GM18951 (cell line): ENCODE measurements at regions of chr13 and their contacts with region 1.

Region 1: DNA sequence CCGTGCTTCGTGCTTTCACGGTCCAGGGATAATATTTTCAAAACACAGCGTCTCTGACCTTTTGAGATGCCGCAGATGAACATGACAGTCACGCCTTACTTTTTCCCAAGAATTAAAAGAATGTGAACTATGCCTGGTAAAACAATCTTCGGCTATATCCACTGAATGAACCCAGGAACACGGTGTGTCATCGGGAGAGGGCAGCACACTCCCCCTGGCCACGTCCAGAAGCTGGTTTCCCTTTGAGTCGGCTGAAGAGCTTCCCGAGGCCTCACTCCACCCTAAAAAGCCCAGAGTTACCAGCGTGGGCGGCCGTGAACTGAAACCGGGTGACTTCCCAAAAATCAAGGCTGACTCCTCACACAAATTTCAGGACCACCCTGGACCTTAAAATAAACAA is 22.9 kb upstream of the SHISA2 start:
- POLR2A ChIP-seq: no peak

Region 2: GRCh38 chr13:25001476-25002206 is 1073.1 kb before region 1 on chr13:
- in situ Hi-C with region 1: loop called (anchors 5 kb)
- POLR2A ChIP-seq: no peak

Region 3: GRCh38 chr13:25886438-25887214 is 188.1 kb before region 1 on chr13:
- in situ Hi-C with region 1: no loop called
- POLR2A ChIP-seq: no peak

Region 4: GRCh38 chr13:26896986-26897668 is 822.4 kb after region 1 on chr13:
- in situ Hi-C with region 1: no loop called
- POLR2A ChIP-seq: no peak

Region 5: DNA sequence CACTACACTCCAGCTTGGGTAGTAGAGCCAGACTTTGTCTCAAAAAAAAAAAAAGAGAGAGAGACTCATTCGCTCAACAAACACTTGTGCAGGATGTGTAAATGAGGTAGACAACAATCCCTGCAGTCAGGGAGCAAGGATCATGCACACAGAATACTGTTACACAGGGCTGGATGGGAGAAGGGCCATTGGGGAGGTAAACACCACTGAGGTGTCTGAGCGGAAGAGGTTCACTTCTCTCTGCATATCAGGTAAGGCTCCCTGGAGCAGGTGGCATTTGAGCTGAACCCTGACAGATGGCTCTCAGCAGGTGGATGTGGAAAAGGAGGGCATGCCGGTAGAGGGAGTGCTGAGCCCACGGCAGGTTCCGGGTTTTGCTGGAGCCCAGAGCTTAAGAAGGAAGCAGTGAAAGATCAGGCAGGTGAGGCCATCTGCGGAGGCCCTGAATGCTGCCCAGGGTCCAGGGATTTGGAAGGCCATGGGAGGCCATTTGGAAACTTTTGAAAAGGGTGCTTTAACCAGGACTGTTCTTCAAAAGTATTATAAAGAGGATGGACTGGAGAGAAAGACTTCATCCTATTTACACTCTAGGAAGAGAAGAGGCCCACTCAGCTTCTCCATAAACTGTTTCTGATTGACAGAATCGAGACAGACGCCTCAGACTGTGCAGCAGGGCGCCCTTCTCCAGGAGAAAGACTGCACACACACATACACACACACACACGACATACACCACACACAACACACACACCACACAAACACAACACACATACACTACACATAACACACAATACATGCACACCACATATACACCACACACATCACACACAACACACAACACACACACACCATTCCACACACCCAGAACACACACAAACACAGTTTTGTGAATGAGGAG is 897.5 kb after region 1 on chr13:
- in situ Hi-C with region 1: no loop called
- POLR2A ChIP-seq: no peak